Activated naive CD4-positive, alpha-beta T cell treated with anti-CD3 and anti-CD28 coated beads for 36 hours (primary cell): ENCODE measurements at regions of chr15 and their contacts with region 1.

Region 1: DNA sequence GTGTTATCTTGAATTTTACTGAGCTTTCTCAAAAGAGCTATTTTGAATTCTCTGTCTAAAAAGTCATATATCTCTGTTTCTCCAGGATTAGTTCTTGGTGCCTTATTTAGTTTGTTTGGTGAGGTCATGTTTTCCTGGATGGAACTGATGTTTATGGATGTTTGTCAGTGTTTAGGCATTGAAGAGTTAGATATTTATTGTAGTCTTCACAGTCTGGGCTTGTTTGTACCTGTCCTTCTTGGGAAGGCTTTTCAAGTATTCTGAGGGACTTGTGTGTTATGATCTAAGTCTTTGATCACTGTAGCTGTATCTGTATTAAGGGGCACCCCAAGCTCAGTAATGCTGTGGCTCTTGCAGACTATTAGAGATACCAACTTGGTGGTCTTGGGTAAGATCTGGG is 10.6 kb upstream of the RAD51 start:
- DNase-seq: no peak
- H3K4me3 Mint-ChIP-seq: no peak overlapping the region
- H3K27ac Mint-ChIP-seq: no peak overlapping the region
- H3K4me1 Mint-ChIP-seq: no peaks in the 10 kb centered on the region
- H3K27me3 Mint-ChIP-seq: no peaks in the 10 kb centered on the region

Region 2: GRCh38 chr15:40523611-40524010 is 160.8 kb before region 1 on chr15:
- CTCF ChIA-PET with region 1: no interaction called
- intact Hi-C with region 1: loop called (anchors 5 kb)
- DNase-seq: no peak
- H3K4me3 Mint-ChIP-seq: no peak overlapping the region
- H3K27ac Mint-ChIP-seq: no peak overlapping the region
- H3K4me1 Mint-ChIP-seq: peaks cover 3% of the 10 kb centered on the region
- H3K27me3 Mint-ChIP-seq: no peaks in the 10 kb centered on the region

Region 3: DNA sequence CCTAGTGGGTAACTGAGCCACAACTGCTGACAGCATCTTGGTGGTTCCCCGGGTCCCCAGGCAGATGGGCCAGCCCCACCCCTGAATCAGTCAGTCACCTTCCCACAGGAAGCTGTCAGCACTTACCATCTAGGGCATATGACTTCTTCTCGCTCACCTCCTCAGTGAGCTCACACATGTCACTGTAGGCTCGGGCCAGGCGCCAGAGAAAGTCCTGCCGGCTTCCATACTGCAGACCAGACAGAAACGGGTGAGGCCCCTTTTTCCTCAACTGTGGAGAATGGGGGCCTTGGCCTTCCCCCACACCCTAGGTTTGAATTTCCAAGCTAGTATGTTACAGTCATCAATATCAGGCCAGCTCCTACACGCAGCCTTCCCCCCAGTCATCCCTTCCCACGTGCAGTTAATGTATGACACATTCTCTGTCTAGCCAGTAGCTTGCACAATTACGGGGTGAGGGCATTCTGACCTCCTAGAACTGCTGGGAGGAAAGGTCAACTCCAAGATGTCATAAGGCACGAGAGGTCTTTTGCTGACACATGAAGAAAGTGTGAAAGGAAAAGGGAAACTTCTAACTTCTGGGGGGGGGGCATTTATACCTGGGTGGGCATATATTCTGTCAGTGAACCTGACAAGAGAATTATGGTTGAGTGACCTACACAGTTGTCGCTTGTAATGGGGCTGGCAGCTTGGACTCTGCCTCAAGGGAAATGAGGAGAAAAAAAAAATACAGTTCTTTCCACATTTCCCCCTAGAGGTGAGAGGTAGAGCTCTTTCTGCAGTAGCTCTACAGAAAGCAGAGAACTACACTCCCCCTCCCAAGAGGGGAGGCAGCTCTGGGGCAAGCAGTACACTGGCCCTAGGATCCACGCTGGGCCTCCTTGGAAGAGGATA is 59.8 kb after region 1 on chr15:
- CTCF ChIA-PET with region 1: interaction called, 3 read pairs
- intact Hi-C with region 1: loop called (anchors 2 kb)
- DNase-seq: peak; percentile 81
- H3K4me3 Mint-ChIP-seq: no peak overlapping the region
- H3K27ac Mint-ChIP-seq: peak overlapping the region; percentile 48
- H3K4me1 Mint-ChIP-seq: peaks cover 15% of the 10 kb centered on the region
- H3K27me3 Mint-ChIP-seq: no peaks in the 10 kb centered on the region

Region 4: DNA sequence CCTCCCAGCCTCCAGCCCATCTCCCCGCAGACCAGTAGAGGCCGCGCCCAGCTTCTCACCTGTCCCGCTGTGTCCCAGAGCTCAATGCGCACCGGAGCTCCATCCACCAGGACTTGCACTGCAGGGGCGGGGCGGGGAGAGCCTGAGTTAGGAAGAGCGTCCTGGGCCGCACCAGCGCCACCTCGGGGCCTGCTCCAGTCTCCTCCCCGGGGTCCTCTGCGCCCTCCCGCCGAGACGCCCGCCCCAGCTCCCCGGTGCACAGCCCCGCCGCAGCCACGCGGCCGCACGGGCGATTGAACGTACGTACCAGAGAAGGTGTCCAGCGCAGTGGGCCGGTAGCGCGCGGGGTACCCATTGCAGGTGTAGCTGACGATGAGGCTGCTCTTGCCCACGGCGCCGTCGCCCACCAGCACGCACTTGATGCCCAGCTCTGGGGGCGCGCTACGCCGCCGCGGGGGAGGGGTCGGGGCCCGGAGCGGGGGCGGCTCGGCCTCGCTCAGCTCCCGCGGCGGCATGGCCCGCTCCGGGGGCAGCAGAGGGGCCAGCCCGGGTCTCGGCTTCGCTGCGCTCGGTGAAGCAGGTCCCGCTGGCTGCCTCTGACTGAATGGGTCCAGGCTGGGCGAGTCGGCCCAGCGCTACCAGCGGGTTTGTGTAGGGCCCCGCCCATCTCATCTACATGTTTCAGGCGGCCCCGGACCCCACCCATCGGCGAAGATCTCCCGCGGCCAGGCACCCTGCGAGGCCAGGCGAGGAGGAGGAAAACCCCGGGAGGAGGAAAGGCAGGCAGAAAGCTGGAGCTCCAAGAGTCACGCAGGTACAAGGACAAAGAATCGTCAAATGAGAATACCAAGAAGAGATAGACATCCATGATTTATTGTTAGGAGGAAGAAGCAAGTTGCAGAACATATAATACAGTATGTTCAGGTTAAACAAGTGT is 189.5 kb after region 1 on chr15 and contains the start of gene RHOV:
- CTCF ChIA-PET with region 1: no interaction called
- intact Hi-C with region 1: loop called (anchors 5 kb)
- DNase-seq: peak; percentile 61
- H3K4me3 Mint-ChIP-seq: peak within 1 kb of the TSS; percentile 73
- H3K27ac Mint-ChIP-seq: no peak within 1 kb of the TSS
- H3K4me1 Mint-ChIP-seq: peaks cover 19% of the 10 kb centered on the region
- H3K27me3 Mint-ChIP-seq: peaks cover 10% of the 10 kb centered on the region
- total RNA-seq, gene RHOV: 0.22 TPM in 1 of 2 experiments, not detected in the other

Region 5: GRCh38 chr15:41774062-41774881 is 1089.9 kb after region 1 on chr15 and contains the start of gene MAPKBP1:
- CTCF ChIA-PET with region 1: no interaction called
- intact Hi-C with region 1: no loop called
- DNase-seq: peak; percentile 98
- H3K4me3 Mint-ChIP-seq: peak within 1 kb of the TSS; percentile 85
- H3K27ac Mint-ChIP-seq: peak within 1 kb of the TSS; percentile 91
- H3K4me1 Mint-ChIP-seq: peaks cover 56% of the 10 kb centered on the region
- H3K27me3 Mint-ChIP-seq: no peaks in the 10 kb centered on the region
- total RNA-seq, gene MAPKBP1: 13.8 to 13.9 TPM

Region 6: GRCh38 chr15:42427429-42428223 is 1743.2 kb after region 1 on chr15:
- CTCF ChIA-PET with region 1: no interaction called
- intact Hi-C with region 1: no loop called
- DNase-seq: no peak
- H3K4me3 Mint-ChIP-seq: no peak overlapping the region
- H3K27ac Mint-ChIP-seq: no peak overlapping the region
- H3K4me1 Mint-ChIP-seq: peaks cover 3% of the 10 kb centered on the region
- H3K27me3 Mint-ChIP-seq: no peaks in the 10 kb centered on the region